B cell (primary cell): ENCODE measurements at regions of chr2 and their contacts with region 1.

Region 1: DNA sequence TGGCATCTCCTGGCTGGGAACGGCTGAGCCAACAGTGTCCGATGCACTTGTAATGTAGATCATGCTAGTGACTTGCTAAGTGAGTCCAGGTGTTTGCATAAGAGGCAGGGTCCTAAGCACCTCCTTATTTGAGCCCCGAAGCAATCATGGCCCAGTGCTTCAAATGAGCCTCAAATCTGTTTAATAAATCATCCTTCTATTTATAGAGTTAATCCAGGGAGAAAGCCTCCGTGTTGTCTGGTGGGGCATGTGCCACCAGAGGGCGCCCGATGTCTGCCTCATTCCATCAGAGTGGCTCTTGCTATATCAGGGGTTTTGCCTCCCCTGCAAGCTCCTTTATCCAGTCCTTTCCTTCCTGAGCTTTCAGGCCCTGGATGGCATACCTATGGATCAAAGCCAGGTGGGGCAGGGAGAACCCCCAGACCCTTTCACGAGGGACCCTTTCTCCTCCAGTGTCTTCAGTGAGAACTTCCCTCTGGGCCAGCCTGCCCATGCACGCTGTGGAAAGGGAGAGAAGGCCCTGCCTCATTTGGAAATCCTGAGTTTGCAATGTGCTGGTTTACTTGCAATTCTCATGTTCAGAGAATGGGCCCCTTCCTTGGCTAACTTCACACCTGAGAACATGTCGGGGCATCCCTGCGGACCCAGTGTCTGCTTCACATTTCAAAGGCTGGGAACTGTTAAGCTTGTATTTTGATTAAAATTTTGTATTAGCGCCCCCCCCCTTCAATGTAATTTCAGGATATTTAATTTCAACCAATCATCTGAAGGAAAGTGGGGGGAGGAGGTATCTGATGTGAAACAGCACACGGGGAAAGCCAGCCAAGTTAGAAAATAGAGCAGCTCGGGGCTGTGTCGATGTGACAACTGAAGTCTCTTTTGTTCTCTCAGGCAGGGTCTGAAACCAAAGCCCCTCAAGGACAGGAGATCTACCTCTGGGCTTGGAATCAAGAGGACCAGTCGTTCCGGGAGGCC is 39.7 kb downstream of the RDH14 start:
- DNase-seq: peak; percentile 71
- ATAC-seq: peak; percentile 53
- H3K4me3 ChIP-seq: no peak overlapping the region
- H3K4me3 Mint-ChIP-seq: no peak overlapping the region
- H3K27ac ChIP-seq: no peak overlapping the region
- H3K27ac Mint-ChIP-seq: no peak overlapping the region
- H3K4me1 ChIP-seq: no peaks in the 10 kb centered on the region
- H3K4me1 Mint-ChIP-seq: no peaks in the 10 kb centered on the region
- H3K27me3 ChIP-seq: peaks cover 0 to 13% (median 2%) of the 10 kb centered on the region in 4 experiments
- H3K27me3 Mint-ChIP-seq: peaks cover 22% of the 10 kb centered on the region
- CTCF ChIP-seq: peak; percentile 82

Region 2: GRCh38 chr2:18398833-18399232 is 121.9 kb before region 1 on chr2:
- CTCF ChIA-PET with region 1: no interaction called
- POLR2A ChIA-PET with region 1: no interaction called
- intact Hi-C with region 1: no loop called
- DNase-seq: no peak
- ATAC-seq: no peak
- H3K4me3 ChIP-seq: no peak overlapping the region
- H3K4me3 Mint-ChIP-seq: no peak overlapping the region
- H3K27ac ChIP-seq: no peak overlapping the region
- H3K27ac Mint-ChIP-seq: no peak overlapping the region
- H3K4me1 ChIP-seq: no peaks in the 10 kb centered on the region
- H3K4me1 Mint-ChIP-seq: no peaks in the 10 kb centered on the region
- H3K27me3 ChIP-seq: peaks cover 0 to 7% (median 0%) of the 10 kb centered on the region in 4 experiments
- H3K27me3 Mint-ChIP-seq: peaks cover 11% of the 10 kb centered on the region
- CTCF ChIP-seq: no peak

Region 3: GRCh38 chr2:18749912-18750526 is 229.3 kb after region 1 on chr2:
- CTCF ChIA-PET with region 1: interaction called, 3 read pairs
- POLR2A ChIA-PET with region 1: no interaction called
- intact Hi-C with region 1: loop called (anchors 5 kb)
- DNase-seq: peak; percentile 36
- ATAC-seq: no peak
- H3K4me3 ChIP-seq: no peak overlapping the region
- H3K4me3 Mint-ChIP-seq: no peak overlapping the region
- H3K27ac ChIP-seq: no peak overlapping the region
- H3K27ac Mint-ChIP-seq: no peak overlapping the region
- H3K4me1 ChIP-seq: no peaks in the 10 kb centered on the region
- H3K4me1 Mint-ChIP-seq: no peaks in the 10 kb centered on the region
- H3K27me3 ChIP-seq: no peaks in the 10 kb centered on the region
- H3K27me3 Mint-ChIP-seq: no peaks in the 10 kb centered on the region
- CTCF ChIP-seq: peak; percentile 70

Region 4: GRCh38 chr2:19377717-19378116 is 857.0 kb after region 1 on chr2:
- CTCF ChIA-PET with region 1: interaction called, 24 read pairs
- POLR2A ChIA-PET with region 1: no interaction called
- intact Hi-C with region 1: no loop called
- DNase-seq: no peak
- ATAC-seq: no peak
- H3K4me3 ChIP-seq: no peak overlapping the region
- H3K4me3 Mint-ChIP-seq: no peak overlapping the region
- H3K27ac ChIP-seq: no peak overlapping the region
- H3K27ac Mint-ChIP-seq: no peak overlapping the region
- H3K4me1 ChIP-seq: no peaks in the 10 kb centered on the region
- H3K4me1 Mint-ChIP-seq: no peaks in the 10 kb centered on the region
- H3K27me3 ChIP-seq: peaks cover 0 to 8% (median 6%) of the 10 kb centered on the region in 4 experiments
- H3K27me3 Mint-ChIP-seq: peaks cover 47% of the 10 kb centered on the region
- CTCF ChIP-seq: peak; percentile 17

Region 5: DNA sequence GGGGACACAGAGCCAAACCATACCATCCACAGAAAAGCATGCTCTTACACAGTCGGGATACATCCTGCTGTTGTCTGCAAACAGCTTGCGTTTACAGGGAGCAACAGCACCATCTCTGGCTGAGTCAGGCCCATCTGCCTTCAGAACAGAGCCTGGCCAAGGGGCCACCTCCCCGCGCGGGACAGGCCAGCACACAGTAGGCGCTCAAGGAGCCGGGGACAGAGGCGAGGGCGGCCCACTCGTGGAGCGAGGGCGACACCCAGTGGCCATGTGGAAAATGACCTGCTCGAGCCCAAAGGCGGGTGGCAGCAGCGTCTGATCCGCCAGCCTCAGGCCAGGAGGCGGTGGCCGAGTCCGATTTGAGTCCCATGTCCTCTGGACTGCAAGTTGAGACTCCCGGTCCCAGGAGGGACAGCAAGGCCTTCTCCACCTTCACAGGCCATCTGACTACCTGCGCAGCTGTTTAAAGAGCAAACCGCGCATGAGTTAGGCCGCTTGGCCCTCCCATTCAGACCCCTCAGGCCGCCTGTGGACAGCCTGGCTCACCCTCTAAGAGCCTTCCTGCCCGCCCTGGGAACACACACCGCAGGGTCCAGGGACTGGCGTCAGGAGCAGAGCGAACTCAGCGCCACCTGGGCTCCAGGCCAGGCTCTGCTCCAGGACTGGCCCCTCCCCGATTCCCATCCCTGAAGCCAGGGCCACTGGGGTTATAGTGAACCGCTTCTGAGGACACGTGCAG is 1342.7 kb after region 1 on chr2:
- CTCF ChIA-PET with region 1: interaction called, 103 read pairs
- POLR2A ChIA-PET with region 1: interaction called, 7 read pairs
- intact Hi-C with region 1: no loop called
- DNase-seq: peak; percentile 77
- ATAC-seq: peak; percentile 87
- H3K4me3 ChIP-seq: no peak overlapping the region
- H3K4me3 Mint-ChIP-seq: no peak overlapping the region
- H3K27ac ChIP-seq: no peak overlapping the region
- H3K27ac Mint-ChIP-seq: no peak overlapping the region
- H3K4me1 ChIP-seq: peaks cover 10 to 13% of the 10 kb centered on the region in 2 donors
- H3K4me1 Mint-ChIP-seq: peaks cover 10% of the 10 kb centered on the region
- H3K27me3 ChIP-seq: peaks cover 0 to 8% (median 0%) of the 10 kb centered on the region in 4 experiments
- H3K27me3 Mint-ChIP-seq: peaks cover 4% of the 10 kb centered on the region
- CTCF ChIP-seq: peak; percentile 99